Activated CD8-positive, alpha-beta memory T cell treated with anti-CD3 and anti-CD28 coated beads, Interleukin-2, amount 10 ng/mL, durations not matched to agents 7 days and 5 days (primary cell): ENCODE measurements at regions of chr7 and their contacts with region 1.

Region 1: DNA sequence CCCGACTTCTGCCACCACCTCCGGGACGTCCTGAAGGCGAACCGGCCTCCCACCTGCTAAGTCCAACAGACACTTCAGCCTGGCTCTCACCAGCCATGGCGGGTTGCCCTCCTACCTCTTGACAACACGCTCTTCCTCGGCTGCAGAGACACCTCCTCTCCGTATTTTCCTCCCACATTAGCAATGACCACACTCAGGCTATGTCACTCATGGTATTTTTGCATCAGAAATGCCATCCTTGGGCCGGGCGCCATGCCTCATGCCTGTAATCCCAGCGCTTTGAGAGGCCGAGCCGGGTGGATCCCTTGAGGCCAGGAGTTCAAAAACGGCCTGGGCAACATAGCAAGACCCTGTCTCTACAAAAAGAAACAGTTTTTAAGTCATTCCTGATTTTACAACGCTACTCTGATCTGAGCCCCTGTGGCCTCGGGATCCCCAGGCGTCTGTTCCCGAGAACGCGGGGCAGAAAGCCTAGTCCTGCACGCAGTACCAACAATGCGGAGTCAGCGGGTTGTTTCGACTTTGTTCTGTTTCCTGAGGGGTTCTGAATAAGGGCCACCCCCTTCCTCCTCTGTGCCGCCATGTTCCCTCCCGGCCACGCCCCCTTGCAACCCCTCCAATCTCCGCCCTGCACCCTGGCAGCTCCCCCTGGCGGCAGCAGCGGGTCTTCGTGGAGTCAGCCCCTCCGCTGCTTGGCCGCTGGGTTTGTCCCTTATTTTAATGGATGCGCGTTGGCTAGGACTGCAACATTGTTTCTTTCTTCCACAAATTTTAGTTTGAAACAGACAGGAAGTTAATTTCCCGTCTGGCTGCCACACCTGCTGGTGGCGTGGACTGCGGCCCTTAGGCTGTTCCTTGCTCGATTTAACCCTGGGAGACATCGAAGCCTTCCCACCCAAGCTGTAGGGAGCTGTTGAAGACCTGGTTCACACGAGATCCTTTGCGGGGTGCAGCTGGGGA is 9.7 kb upstream of the ZFAND2A start:
- DNase-seq: peak; percentile 96
- ATAC-seq: peak; percentile 99
- H3K4me3 Mint-ChIP-seq: peak overlapping the region; percentile 80
- H3K27ac Mint-ChIP-seq: peak overlapping the region; percentile 95
- H3K4me1 Mint-ChIP-seq: peaks cover 14% of the 10 kb centered on the region
- H3K27me3 Mint-ChIP-seq: no peaks in the 10 kb centered on the region

Region 2: GRCh38 chr7:1086588-1087464 is 82.9 kb before region 1 on chr7:
- CTCF ChIA-PET with region 1: interaction called, 69 read pairs
- DNase-seq: peak; percentile 82
- ATAC-seq: peak; percentile 92
- H3K4me3 Mint-ChIP-seq: peak overlapping the region; percentile 56
- H3K27ac Mint-ChIP-seq: no peak overlapping the region
- H3K4me1 Mint-ChIP-seq: peaks cover 7% of the 10 kb centered on the region
- H3K27me3 Mint-ChIP-seq: peaks cover 6% of the 10 kb centered on the region

Region 3: GRCh38 chr7:1103009-1103788 is 66.5 kb before region 1 on chr7:
- CTCF ChIA-PET with region 1: interaction called, 12 read pairs
- DNase-seq: peak; percentile 67
- ATAC-seq: peak; percentile 79
- H3K4me3 Mint-ChIP-seq: peak overlapping the region; percentile 60
- H3K27ac Mint-ChIP-seq: peak overlapping the region; percentile 83
- H3K4me1 Mint-ChIP-seq: peaks cover 28% of the 10 kb centered on the region
- H3K27me3 Mint-ChIP-seq: no peaks in the 10 kb centered on the region

Region 4: GRCh38 chr7:1181640-1182039 is 12.0 kb after region 1 on chr7:
- CTCF ChIA-PET with region 1: interaction called, 12 read pairs
- DNase-seq: no peak
- ATAC-seq: no peak
- H3K4me3 Mint-ChIP-seq: no peak overlapping the region
- H3K27ac Mint-ChIP-seq: no peak overlapping the region
- H3K4me1 Mint-ChIP-seq: peaks cover 9% of the 10 kb centered on the region
- H3K27me3 Mint-ChIP-seq: peaks cover 41% of the 10 kb centered on the region